ENCODE measurements at regions of chr16 and their contacts with region 1.

Region 1: DNA sequence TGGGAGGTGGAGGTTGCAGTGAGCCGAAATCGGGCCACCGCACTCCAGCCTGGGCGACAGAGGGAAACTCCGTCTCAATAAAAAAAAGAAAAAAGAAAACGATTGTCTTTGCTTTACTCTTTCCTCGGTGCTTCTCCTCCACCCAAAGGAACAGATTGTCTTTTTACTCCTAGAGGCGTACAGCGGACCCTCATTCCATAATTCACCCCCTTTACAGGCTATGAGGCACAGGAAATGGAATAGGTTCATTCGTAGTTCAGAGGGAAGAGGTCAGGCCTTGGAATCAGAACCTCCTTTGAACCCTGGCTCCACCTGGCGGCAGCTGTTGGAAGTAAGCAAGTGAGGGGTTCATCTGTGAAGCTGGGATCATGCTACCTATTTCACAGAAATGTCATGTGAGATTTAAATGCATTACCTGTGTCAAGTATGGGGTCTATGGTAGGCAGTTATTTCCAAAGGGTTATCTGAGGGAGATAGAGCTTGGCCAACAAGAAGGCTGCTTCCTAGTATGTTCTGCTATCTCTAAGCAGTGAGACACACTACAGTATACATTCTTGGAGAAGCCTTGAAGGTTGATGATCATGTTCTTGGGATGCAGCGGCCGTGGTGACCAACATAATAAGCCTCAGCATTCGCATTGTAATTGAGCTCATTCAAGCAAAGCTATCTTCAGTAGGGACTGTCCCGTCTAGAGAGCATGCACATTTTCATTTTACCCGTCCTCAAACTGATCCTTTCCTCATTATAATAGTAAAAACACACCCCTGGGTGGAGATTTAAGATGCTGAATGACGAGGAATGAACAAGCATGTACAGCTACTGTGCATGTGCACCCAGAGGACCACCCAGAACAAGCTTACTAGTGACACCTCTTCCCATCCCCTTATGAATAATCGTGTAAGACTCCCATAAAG is 18.7 kb upstream of the ZNF689 start:
- DNase-seq: peak; percentile 54 to 73
- ATAC-seq: peak; percentile 88 to 95
- H3K4me3 ChIP-seq: peak overlapping the region; percentile 30 to 41 (median 34)
- H3K27ac ChIP-seq: peak overlapping the region; percentile 39 to 71 (median 61)
- H3K4me1 ChIP-seq: no peaks in the 10 kb centered on the region
- H3K27me3 ChIP-seq: no peaks in the 10 kb centered on the region
- CTCF ChIP-seq: peak; percentile 80 to 91 (median 86)
- POLR2A ChIP-seq: no peak

Region 2: GRCh38 chr16:30429678-30430427 is 199.0 kb before region 1 on chr16 and contains the start of gene DCTPP1:
- in situ Hi-C with region 1: loop called in 3 of 4 experiments (anchors 10 to 25 kb)
- intact Hi-C with region 1: loop called (anchors 5 kb)
- DNase-seq: peak; percentile 96 to 98
- ATAC-seq: peak; percentile 100
- H3K4me3 ChIP-seq: peak within 1 kb of the TSS; percentile 73 to 89 (median 82)
- H3K27ac ChIP-seq: peak within 1 kb of the TSS; percentile 77 to 84 (median 84)
- H3K4me1 ChIP-seq: peaks cover 12 to 13% of the 10 kb centered on the region in 2 donors
- H3K27me3 ChIP-seq: no peaks in the 10 kb centered on the region
- CTCF ChIP-seq: peak; percentile 82 to 89 (median 84)
- POLR2A ChIP-seq: peak; percentile 9 to 50
- total RNA-seq, gene DCTPP1: 11.8 to 32.6 (median 17.8) TPM

Region 3: GRCh38 chr16:30557957-30558788 is 70.7 kb before region 1 on chr16 and contains the start of gene ZNF764:
- in situ Hi-C with region 1: no loop called
- intact Hi-C with region 1: loop called (anchors 1 kb)
- DNase-seq: peak; percentile 99
- ATAC-seq: peak; percentile 94 to 98
- H3K4me3 ChIP-seq: peak within 1 kb of the TSS; percentile 88 to 99 (median 98)
- H3K27ac ChIP-seq: peak within 1 kb of the TSS; percentile 95 to 99 (median 98)
- H3K4me1 ChIP-seq: peaks cover 22 to 28% of the 10 kb centered on the region in 2 donors
- H3K27me3 ChIP-seq: no peaks in the 10 kb centered on the region
- CTCF ChIP-seq: no peak
- POLR2A ChIP-seq: peak; percentile 49
- total RNA-seq, gene ZNF764: 3.7 to 5.5 (median 4.9) TPM

Region 4: GRCh38 chr16:30585400-30586189 is 43.3 kb before region 1 on chr16 and contains the start of gene ZNF785:
- in situ Hi-C with region 1: no loop called
- intact Hi-C with region 1: loop called (anchors 1 kb)
- DNase-seq: peak; percentile 98 to 99
- ATAC-seq: peak; percentile 100
- H3K4me3 ChIP-seq: peak within 1 kb of the TSS; percentile 80 to 93 (median 90)
- H3K27ac ChIP-seq: peak within 1 kb of the TSS; percentile 90 to 97 (median 94)
- H3K4me1 ChIP-seq: peaks cover 14% of the 10 kb centered on the region in 2 donors
- H3K27me3 ChIP-seq: no peaks in the 10 kb centered on the region
- CTCF ChIP-seq: peak in 4 of 5 experiments; percentile 4 to 42 (median 30)
- POLR2A ChIP-seq: peak in 1 of 2 donors; percentile 24
- total RNA-seq, gene ZNF785: 0.70 to 3.2 (median 1.0) TPM

Region 5: GRCh38 chr16:30650369-30651123 is 21.7 kb after region 1 on chr16 and contains the start of gene PRR14:
- in situ Hi-C with region 1: no loop called
- intact Hi-C with region 1: loop called (anchors 1 kb)
- DNase-seq: peak; percentile 100
- ATAC-seq: peak; percentile 90 to 91
- H3K4me3 ChIP-seq: peak within 1 kb of the TSS; percentile 83 to 96 (median 93)
- H3K27ac ChIP-seq: peak within 1 kb of the TSS; percentile 94 to 99 (median 98)
- H3K4me1 ChIP-seq: peaks cover 6 to 18% of the 10 kb centered on the region in 2 donors
- H3K27me3 ChIP-seq: no peaks in the 10 kb centered on the region
- CTCF ChIP-seq: peak in 4 of 5 experiments; percentile 38 to 69 (median 48)
- POLR2A ChIP-seq: peak in 1 of 2 donors; percentile 74
- total RNA-seq, gene PRR14: 8.8 to 28.4 (median 17.8) TPM